ENCODE measurements at regions of chr16 and their contacts with region 1.

Region 1: GRCh38 chr16:29694384-29695195 is 15.6 kb downstream of the QPRT start:
- DNase-seq: no peak
- ATAC-seq: peak; percentile 12
- H3K4me3 ChIP-seq: no peak overlapping the region
- H3K27ac ChIP-seq: no peak overlapping the region
- H3K4me1 ChIP-seq: no peaks in the 10 kb centered on the region
- H3K27me3 ChIP-seq: no peaks in the 10 kb centered on the region
- CTCF ChIP-seq: no peak
- POLR2A ChIP-seq: no peak

Region 2: GRCh38 chr16:30028438-30029076 is 334.0 kb after region 1 on chr16:
- intact Hi-C with region 1: loop called (anchors 10 kb)
- DNase-seq: no peak
- ATAC-seq: no peak
- H3K4me3 ChIP-seq: no peak overlapping the region
- H3K27ac ChIP-seq: no peak overlapping the region
- H3K4me1 ChIP-seq: peaks cover 8% of the 10 kb centered on the region
- H3K27me3 ChIP-seq: peaks cover 0 to 31% of the 10 kb centered on the region in 2 donors
- CTCF ChIP-seq: no peak
- POLR2A ChIP-seq: no peak

Measured in body of pancreas (tissue), 4 donors.